Spleen (tissue), 13 donors: ENCODE measurements at regions of chr2 and their contacts with region 1.

Region 1: DNA sequence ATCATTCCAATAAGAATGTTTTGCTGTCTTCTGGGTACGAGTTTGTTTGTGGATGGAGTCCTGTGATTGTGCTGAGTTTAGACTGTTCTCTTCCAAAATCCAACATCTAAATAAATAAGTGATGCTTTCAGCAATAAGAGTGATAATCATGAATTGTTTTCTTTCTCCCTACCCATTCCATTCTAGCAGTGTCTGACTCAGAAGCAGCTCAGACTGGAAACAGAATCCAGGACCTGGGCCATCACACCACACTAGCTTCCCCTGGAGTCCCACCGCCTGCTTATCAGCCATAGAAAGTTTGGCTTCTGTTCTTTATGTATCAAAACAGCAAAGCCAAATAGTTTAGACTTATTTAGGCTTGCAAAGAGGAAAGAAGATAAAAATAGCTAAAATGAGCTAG is 76.4 kb upstream of the CNGA3 start:
- DNase-seq: no peak
- H3K4me3 ChIP-seq: no peak overlapping the region
- H3K27ac ChIP-seq: no peak overlapping the region
- H3K4me1 ChIP-seq: no peaks in the 10 kb centered on the region
- H3K27me3 ChIP-seq: no peaks in the 10 kb centered on the region
- CTCF ChIP-seq: no peak
- POLR2A ChIP-seq: no peak

Region 2: DNA sequence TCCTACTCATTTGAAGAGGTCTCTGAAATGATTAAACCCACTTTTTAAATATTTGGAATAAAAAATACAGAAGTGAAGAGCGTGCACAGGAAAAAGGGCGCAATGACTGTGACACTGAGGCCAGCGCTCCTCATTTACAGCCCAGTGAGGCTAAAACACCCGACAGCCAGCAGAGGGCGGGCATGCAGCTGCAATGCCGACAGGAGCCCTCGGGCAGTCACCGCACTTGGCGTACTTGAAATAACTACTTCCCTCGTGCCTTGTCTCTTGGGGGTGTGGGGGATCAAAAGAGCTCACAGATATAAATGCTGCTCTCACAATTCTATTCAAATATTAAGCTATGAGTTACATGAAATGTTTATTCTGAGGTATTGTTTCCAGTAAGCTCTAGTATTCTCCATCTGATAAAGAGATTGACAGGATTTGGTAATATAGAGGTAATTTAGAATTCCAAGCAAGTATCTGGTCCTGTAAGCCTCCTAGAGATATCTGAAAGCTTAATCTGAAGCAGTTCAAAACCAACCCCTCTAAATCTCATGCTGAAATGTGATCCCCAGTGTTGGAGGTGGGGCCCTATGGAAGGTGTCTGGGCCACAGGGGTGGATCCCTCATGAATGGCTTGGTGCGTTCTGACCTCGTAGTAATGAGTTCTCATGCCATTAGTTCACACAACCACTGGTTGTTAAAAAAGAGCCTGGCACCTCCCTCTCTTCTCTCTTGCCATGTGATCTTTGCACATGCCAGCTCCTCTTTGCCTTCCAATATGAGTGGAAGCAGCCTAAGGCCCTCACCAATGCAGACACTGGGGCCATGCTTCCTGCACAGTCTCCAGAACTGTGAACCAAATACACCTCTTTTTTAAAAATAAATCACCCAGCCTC is 462.9 kb before region 1 on chr2:
- intact Hi-C with region 1: loop called (anchors 10 kb)
- DNase-seq: peak; percentile 95
- H3K4me3 ChIP-seq: no peak overlapping the region
- H3K27ac ChIP-seq: no peak overlapping the region
- H3K4me1 ChIP-seq: peaks cover 0 to 11% (median 8%) of the 10 kb centered on the region in 6 donors
- H3K27me3 ChIP-seq: no peaks in the 10 kb centered on the region
- CTCF ChIP-seq: peak; percentile 64 to 93 (median 89)
- POLR2A ChIP-seq: no peak

Region 3: DNA sequence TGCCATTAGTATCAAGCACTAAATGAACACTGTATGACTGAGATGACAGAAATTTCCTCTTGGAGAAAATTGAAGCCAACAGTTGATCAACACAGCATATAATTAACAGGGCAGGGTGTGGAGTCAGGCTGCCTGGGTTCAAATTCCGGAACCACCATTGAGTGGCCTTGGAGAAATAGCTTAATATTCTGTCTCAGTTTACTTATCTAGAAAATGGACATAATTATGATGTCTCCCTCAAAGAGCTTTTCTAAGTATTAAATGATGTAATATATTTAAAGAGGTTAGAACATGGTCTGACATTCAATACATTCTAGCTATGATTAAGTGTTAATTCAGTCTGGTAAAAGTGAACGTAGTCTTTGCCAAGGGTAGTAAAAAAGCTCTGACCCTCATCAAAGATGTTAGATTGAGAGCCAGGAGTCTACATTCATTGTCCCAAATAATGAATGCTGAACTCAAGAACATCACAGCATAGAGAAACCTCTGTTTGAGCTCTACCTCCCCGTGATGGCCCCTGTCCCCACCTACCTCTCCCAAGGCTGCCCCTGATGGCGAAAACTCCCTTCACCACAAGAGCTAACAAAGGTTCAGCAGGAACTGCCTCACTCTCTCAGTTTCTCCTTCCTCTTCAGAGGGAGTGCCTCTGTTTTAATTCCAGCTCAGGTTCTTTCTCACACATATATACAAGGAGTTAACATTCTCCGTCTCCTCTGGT is 185.5 kb before region 1 on chr2:
- intact Hi-C with region 1: no loop called
- DNase-seq: no peak
- H3K4me3 ChIP-seq: no peak overlapping the region
- H3K27ac ChIP-seq: no peak overlapping the region
- H3K4me1 ChIP-seq: peaks cover 14 to 50% (median 35%) of the 10 kb centered on the region in 6 donors
- H3K27me3 ChIP-seq: peaks cover 0 to 38% (median 5%) of the 10 kb centered on the region in 7 donors
- CTCF ChIP-seq: no peak
- POLR2A ChIP-seq: no peak

Region 4: DNA sequence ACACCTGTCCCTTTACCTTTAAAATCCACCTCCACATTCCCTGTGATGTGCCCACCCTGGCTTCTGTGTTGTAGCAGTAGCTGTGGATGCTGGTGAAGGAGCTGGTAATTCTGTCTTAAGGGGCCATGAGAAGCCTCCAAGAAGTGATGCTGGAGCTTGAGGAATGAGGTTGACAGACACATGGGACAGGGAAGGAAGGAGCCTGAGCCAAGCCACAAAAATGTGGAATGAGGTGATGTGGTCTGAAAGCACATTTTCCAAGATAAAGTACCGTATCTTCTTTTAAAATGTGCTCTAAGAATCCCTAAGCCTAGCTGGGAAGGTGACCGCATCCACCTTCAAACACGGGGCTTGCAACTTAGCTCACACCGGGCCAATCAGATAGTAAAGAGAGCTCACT is 151.7 kb before region 1 on chr2:
- intact Hi-C with region 1: no loop called
- DNase-seq: no peak
- H3K4me3 ChIP-seq: no peak overlapping the region
- H3K27ac ChIP-seq: no peak overlapping the region
- H3K4me1 ChIP-seq: peaks cover 0 to 1% (median 0%) of the 10 kb centered on the region in 6 donors
- H3K27me3 ChIP-seq: peaks cover 0 to 9% (median 0%) of the 10 kb centered on the region in 7 donors
- CTCF ChIP-seq: no peak
- POLR2A ChIP-seq: no peak

Region 5: DNA sequence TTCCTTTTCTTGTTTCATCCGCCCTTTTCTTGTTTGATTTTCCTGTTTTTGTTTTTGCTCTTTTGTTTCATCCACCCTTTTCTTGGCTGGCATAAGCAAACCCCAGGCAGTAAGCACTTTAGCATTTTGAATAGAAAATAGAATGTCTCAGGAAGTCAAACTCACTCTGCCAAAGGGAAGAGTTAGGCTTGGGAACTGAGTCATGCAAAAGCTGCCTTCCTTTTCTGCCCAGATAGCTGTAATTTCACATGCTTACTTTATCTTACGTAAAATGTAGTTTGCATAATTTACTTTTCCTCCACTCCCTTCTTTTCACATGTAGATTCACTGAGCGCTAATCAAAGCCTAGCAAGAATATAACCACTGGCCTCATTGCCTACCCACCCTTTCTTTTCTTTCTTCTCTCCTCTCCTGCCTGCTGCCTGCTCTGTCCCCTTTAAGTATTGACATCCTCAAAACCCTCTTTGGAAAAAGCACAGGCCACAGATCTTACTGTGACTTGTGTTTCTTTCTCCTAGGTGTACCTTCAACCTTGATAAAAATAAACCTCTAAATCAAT is 124.8 kb after region 1 on chr2:
- intact Hi-C with region 1: no loop called
- DNase-seq: no peak
- H3K4me3 ChIP-seq: no peak overlapping the region
- H3K27ac ChIP-seq: no peak overlapping the region
- H3K4me1 ChIP-seq: no peaks in the 10 kb centered on the region
- H3K27me3 ChIP-seq: peaks cover 0 to 31% (median 0%) of the 10 kb centered on the region in 7 donors
- CTCF ChIP-seq: no peak
- POLR2A ChIP-seq: no peak

Region 6: GRCh38 chr2:98422449-98422848 is 152.6 kb after region 1 on chr2:
- intact Hi-C with region 1: no loop called
- DNase-seq: no peak
- H3K4me3 ChIP-seq: no peak overlapping the region
- H3K27ac ChIP-seq: no peak overlapping the region
- H3K4me1 ChIP-seq: no peaks in the 10 kb centered on the region
- H3K27me3 ChIP-seq: no peaks in the 10 kb centered on the region
- CTCF ChIP-seq: no peak
- POLR2A ChIP-seq: no peak